Activated CD4-positive, alpha-beta memory T cell treated with anti-CD3 and anti-CD28 coated beads, Interleukin-2, amount 10 ng/mL, durations not matched to agents 7 days and 5 days (primary cell): ENCODE measurements at regions of chr10 and their contacts with region 1.

Region 1: DNA sequence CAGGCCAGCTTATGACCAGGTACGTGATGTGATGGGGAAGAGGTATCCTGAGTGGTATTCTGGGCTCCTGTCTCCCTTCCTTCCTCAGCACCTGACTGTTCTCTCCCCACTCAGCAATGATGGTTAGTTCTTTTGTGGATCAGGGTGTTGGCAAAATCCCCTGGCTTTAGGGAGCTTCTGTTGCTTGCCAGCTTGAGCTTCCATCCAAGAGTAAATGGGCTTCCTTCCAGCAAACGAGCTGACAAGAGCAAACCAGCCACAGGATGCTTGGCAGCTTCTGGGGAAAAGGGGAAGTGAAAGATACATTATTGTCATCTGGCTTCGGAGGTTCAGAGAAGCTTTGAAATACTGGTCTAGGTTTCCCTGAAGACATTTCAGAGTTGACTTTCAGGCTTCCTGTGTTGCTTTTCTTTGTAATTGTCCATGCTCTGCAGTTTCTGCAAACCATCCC is 5.2 kb downstream of the DUSP5 start:
- DNase-seq: no peak
- H3K4me3 Mint-ChIP-seq: peak overlapping the region; percentile 99
- H3K27ac Mint-ChIP-seq: peak overlapping the region; percentile 96
- H3K4me1 Mint-ChIP-seq: peaks cover 78% of the 10 kb centered on the region
- H3K27me3 Mint-ChIP-seq: no peaks in the 10 kb centered on the region

Region 2: GRCh38 chr10:110311357-110311949 is 191.4 kb before region 1 on chr10:
- CTCF ChIA-PET with region 1: interaction called, 43 read pairs
- POLR2A ChIA-PET with region 1: interaction called, 49 read pairs
- DNase-seq: peak; percentile 50
- H3K4me3 Mint-ChIP-seq: no peak overlapping the region
- H3K27ac Mint-ChIP-seq: no peak overlapping the region
- H3K4me1 Mint-ChIP-seq: peaks cover 33% of the 10 kb centered on the region
- H3K27me3 Mint-ChIP-seq: peaks cover 3% of the 10 kb centered on the region

Region 3: GRCh38 chr10:110471566-110472139 is 31.2 kb before region 1 on chr10:
- CTCF ChIA-PET with region 1: no interaction called
- POLR2A ChIA-PET with region 1: no interaction called
- DNase-seq: no peak
- H3K4me3 Mint-ChIP-seq: no peak overlapping the region
- H3K27ac Mint-ChIP-seq: no peak overlapping the region
- H3K4me1 Mint-ChIP-seq: no peaks in the 10 kb centered on the region
- H3K27me3 Mint-ChIP-seq: no peaks in the 10 kb centered on the region

Region 4: GRCh38 chr10:110567201-110568054 is 64.6 kb after region 1 on chr10 and contains the start of gene SMC3:
- CTCF ChIA-PET with region 1: interaction called, 4 read pairs
- POLR2A ChIA-PET with region 1: interaction called, 10 read pairs
- DNase-seq: peak; percentile 92
- H3K4me3 Mint-ChIP-seq: peak within 1 kb of the TSS; percentile 95
- H3K27ac Mint-ChIP-seq: peak within 1 kb of the TSS; percentile 95
- H3K4me1 Mint-ChIP-seq: peaks cover 38% of the 10 kb centered on the region
- H3K27me3 Mint-ChIP-seq: peaks cover 1% of the 10 kb centered on the region
- total RNA-seq, gene SMC3: 81.0 to 83.0 TPM

Region 5: DNA sequence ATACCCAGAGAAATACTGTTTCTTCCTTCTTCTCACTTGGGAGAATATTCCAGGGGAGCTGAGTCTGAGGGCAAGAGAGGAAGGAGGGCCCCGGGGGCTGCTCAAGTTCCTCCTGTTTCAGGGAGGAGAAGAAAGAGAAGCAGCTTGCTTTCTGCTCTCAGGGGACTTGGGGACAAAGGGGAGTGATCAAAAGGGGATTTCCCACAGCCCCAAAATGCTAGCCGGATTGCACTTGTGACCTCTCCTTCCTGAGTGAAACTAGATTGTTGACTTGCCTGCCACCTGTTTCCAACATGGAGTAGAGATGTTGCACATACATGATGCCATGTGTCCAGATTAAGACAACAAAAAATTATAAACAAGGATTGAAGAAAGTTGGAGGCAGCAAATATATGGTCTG is 340.2 kb after region 1 on chr10:
- CTCF ChIA-PET with region 1: no interaction called
- POLR2A ChIA-PET with region 1: no interaction called
- DNase-seq: peak; percentile 65
- H3K4me3 Mint-ChIP-seq: no peak overlapping the region
- H3K27ac Mint-ChIP-seq: peak overlapping the region; percentile 17
- H3K4me1 Mint-ChIP-seq: peaks cover 31% of the 10 kb centered on the region
- H3K27me3 Mint-ChIP-seq: no peaks in the 10 kb centered on the region